AG04450 (cell line): ENCODE measurements at regions of chr4 and their contacts with region 1.

Region 1: DNA sequence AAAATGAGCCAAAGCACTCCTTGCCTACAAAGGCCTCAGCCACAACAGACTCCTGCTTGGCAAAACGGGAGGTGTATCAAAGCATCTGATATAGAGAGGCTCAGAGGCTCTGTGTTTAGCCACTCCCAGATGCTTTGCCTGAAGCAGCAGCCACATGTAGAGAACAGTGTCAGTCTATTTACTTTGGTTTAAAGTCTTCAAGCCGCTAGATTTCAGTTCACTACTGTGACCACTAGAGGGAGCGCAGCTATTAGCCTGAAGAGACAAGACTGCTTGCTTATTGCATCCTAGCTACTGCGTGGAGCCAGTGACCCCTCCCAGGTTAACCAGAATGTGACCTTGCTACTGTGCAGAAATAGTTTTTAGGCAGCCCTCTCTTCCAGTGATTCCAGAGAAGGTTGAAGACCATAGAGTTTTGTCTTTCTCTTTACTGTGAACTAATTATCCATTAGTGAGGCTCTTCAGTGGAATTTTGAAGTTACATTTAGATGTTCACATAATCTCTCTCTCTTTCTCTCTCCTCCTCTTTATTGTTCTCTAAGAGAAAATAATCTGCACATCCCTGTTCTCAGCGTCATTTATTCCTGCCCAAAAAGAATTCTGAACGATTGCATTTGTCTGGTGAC is 39.3 kb downstream of the BMP3 start:
- DNase-seq: peak; percentile 86
- H3K4me3 ChIP-seq: no peak overlapping the region
- H3K27ac ChIP-seq: no peak overlapping the region
- H3K27me3 ChIP-seq: no peaks in the 10 kb centered on the region
- CTCF ChIP-seq: peak; percentile 96

Region 2: DNA sequence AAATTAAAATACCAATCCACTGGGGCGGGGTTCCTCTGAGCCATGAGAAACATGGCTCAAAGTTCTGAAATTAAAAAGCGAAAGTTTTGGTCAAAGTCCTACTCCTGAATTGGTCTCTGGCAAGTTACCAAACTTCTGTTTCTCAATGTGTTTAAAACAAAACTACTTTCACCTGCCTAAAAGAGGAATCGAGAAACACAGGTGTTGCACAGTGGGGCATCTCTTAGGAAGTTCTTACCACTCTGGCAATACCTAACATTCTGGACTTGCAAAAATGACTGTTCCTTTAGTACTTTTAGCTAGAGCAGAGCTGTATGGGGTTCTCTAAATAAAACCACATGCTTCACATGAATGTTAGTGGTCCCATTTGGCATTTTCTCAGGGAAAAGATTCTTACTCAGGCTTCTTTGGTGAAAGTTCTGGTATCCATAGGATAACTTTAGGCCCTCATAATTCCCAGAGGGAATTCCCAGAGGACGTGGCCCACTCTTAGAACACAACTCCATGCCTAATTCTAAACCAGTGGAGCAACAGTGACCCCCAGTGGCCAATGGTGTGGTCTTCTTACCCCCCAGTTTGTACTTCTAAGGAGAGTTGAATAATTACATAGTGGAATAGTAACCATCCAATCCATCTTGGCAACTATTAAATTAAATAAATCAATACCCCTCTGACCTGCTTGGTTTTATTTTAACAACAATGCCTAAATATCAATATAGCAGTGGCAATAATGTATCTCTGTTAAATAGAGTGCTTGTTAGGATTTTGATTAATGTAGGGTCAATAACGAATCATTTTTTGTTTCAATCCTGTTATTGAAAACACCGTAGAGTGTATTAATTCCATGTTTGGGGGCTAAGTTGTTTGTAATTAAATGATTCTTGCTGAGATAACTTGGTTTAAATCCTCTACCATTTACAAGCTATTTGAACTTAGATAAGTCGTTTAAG is 17.4 kb before region 1 on chr4:
- CTCF ChIA-PET with region 1: interaction called, 13 read pairs
- POLR2A ChIA-PET with region 1: no interaction called
- DNase-seq: peak; percentile 34
- H3K4me3 ChIP-seq: no peak overlapping the region
- H3K27ac ChIP-seq: no peak overlapping the region
- H3K27me3 ChIP-seq: peaks cover 16% of the 10 kb centered on the region
- CTCF ChIP-seq: peak; percentile 84

Region 3: DNA sequence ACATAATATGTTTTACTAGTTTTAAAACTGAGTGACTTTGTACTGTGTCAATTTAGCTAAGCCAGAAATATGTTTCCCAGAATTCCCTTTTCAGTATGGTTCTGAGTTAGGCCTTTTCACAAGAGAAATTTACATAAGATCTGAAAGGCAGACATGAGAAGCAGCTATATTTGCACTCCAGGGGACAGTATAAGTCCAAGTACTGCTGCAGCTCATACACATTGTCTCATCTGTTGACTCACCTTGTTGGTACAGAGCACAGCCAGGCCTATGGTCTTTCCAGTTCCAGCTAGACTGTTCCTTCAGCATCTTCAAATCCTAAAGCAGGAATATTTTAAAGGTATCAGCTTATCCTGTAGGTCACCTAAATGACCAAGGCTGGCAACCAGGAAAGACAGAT is 14.2 kb after region 1 on chr4:
- CTCF ChIA-PET with region 1: interaction called, 16 read pairs
- POLR2A ChIA-PET with region 1: no interaction called
- DNase-seq: peak; percentile 10
- H3K4me3 ChIP-seq: no peak overlapping the region
- H3K27ac ChIP-seq: no peak overlapping the region
- H3K27me3 ChIP-seq: no peaks in the 10 kb centered on the region
- CTCF ChIP-seq: peak; percentile 58

Region 4: GRCh38 chr4:81360737-81361136 is 290.9 kb after region 1 on chr4:
- CTCF ChIA-PET with region 1: interaction called, 10 read pairs
- POLR2A ChIA-PET with region 1: no interaction called
- DNase-seq: no peak
- H3K4me3 ChIP-seq: no peak overlapping the region
- H3K27ac ChIP-seq: no peak overlapping the region
- H3K27me3 ChIP-seq: no peaks in the 10 kb centered on the region
- CTCF ChIP-seq: no peak

Region 5: GRCh38 chr4:81369886-81370285 is 300.1 kb after region 1 on chr4:
- CTCF ChIA-PET with region 1: interaction called, 41 read pairs
- POLR2A ChIA-PET with region 1: no interaction called
- DNase-seq: no peak
- H3K4me3 ChIP-seq: no peak overlapping the region
- H3K27ac ChIP-seq: no peak overlapping the region
- H3K27me3 ChIP-seq: no peaks in the 10 kb centered on the region
- CTCF ChIP-seq: peak; percentile 34

Region 6: DNA sequence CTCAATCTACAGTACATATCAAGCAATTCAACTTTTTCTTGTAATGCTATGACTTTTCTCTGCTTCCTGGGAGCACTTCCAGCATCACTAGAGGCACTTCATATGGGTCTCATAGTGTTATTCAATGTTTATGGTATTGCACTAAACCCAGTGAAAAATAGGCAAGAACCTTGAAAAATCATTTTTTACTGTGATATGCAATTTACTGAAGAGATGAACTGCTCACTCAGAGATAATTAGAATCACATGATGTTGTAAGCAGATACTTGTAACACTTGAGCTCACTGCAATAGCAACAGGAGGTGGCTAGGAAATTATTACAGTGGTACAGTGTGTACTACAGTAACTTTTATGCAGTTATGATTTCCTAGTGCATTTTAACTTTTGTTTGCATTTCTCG is 308.6 kb after region 1 on chr4:
- CTCF ChIA-PET with region 1: interaction called, 15 read pairs
- POLR2A ChIA-PET with region 1: no interaction called
- DNase-seq: no peak
- H3K4me3 ChIP-seq: no peak overlapping the region
- H3K27ac ChIP-seq: no peak overlapping the region
- H3K27me3 ChIP-seq: peaks cover 2% of the 10 kb centered on the region
- CTCF ChIP-seq: no peak

Region 7: GRCh38 chr4:81628489-81628888 is 558.7 kb after region 1 on chr4:
- CTCF ChIA-PET with region 1: no interaction called
- POLR2A ChIA-PET with region 1: no interaction called
- DNase-seq: no peak
- H3K4me3 ChIP-seq: no peak overlapping the region
- H3K27ac ChIP-seq: no peak overlapping the region
- H3K27me3 ChIP-seq: no peaks in the 10 kb centered on the region
- CTCF ChIP-seq: no peak

Region 8: DNA sequence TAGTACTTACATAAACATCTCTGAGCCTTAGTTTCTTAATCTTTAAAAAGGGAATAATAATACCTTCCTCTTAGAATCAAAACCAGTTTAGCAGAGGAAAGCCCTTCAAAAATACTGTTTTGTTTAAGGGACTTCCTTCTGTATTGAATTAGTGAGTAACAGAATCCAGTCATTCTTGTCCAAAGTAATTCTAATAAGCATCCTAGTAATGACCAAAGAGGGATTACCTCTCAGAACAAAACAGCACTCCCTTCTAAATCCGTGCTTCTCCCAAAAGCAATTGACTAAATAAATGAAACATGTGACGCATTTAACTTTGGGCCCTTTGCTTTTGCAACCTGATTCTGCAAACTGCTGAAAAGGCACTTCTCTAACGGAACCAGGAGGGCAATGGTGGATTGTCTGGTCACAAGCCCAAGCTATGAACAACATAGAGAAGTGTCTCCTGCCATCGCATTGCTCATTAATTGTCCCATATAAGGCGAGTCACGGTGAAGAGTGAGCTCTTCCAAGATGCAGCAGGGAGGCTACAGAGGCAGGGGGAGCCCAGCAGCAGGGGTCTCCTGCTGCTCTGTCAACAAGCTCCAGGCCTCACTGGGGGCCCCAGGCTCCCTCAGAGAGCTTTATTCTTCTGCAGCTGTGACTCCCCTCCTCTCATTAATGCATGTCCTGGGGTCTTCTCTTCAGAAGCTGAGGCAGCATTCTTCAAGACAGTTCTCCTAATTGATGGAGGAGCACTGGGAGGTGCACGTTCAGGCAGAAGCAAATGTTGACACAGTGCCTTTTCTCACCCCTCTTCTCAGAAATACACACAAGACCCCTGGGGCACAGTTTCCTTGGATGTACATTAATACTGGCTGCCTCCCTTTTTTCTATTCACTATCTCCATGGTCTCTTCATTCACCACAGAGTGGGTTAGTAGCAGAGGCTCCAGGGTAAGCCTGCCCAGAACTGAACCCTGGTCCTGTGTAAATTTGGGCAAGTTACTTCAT is 821.5 kb after region 1 on chr4:
- CTCF ChIA-PET with region 1: no interaction called
- POLR2A ChIA-PET with region 1: no interaction called
- DNase-seq: no peak
- H3K4me3 ChIP-seq: no peak overlapping the region
- H3K27ac ChIP-seq: no peak overlapping the region
- H3K27me3 ChIP-seq: no peaks in the 10 kb centered on the region
- CTCF ChIP-seq: no peak